GM18951 (cell line): ENCODE measurements at regions of chr5 and their contacts with region 1.

Region 1: GRCh38 chr5:6712577-6713275 is 506 bp upstream of the TENT4A start:
- POLR2A ChIP-seq: peak; percentile 80

Region 2: GRCh38 chr5:6623941-6624340 is 88.8 kb before region 1 on chr5:
- in situ Hi-C with region 1: loop called (anchors 10 kb)
- POLR2A ChIP-seq: no peak